WTC11 (cell line): ENCODE measurements at regions of chr1 and their contacts with region 1.

Region 1: GRCh38 chr1:48202030-48202752 is 20.3 kb upstream of the SLC5A9 start:
- DNase-seq: peak; percentile 80
- ATAC-seq: peak; percentile 76
- H3K4me3 Mint-ChIP-seq: no peak overlapping the region
- H3K27ac Mint-ChIP-seq: no peak overlapping the region
- H3K4me1 Mint-ChIP-seq: peaks cover 5% of the 10 kb centered on the region
- H3K27me3 Mint-ChIP-seq: peaks cover 3% of the 10 kb centered on the region; the same call in 1 of the 2 replicates
- CTCF ChIP-seq: peak; percentile 84

Region 2: GRCh38 chr1:48093696-48094528 is 108.3 kb before region 1 on chr1:
- CTCF ChIA-PET with region 1: interaction called, 17 read pairs
- POLR2A ChIA-PET with region 1: no interaction called
- DNase-seq: peak; percentile 91
- ATAC-seq: peak; percentile 97
- H3K4me3 Mint-ChIP-seq: peak overlapping the region; percentile 40
- H3K27ac Mint-ChIP-seq: no peak overlapping the region
- H3K4me1 Mint-ChIP-seq: peaks cover 4% of the 10 kb centered on the region
- H3K27me3 Mint-ChIP-seq: peaks cover 54% of the 10 kb centered on the region
- CTCF ChIP-seq: peak; percentile 82

Region 3: GRCh38 chr1:48109390-48110013 is 92.7 kb before region 1 on chr1:
- CTCF ChIA-PET with region 1: interaction called, 62 read pairs
- POLR2A ChIA-PET with region 1: no interaction called
- DNase-seq: no peak
- ATAC-seq: peak; percentile 87
- H3K4me3 Mint-ChIP-seq: no peak overlapping the region
- H3K27ac Mint-ChIP-seq: no peak overlapping the region
- H3K4me1 Mint-ChIP-seq: peaks cover 22% of the 10 kb centered on the region
- H3K27me3 Mint-ChIP-seq: no peaks in the 10 kb centered on the region
- CTCF ChIP-seq: peak; percentile 53; the same call in 1 of the 2 replicates

Region 4: DNA sequence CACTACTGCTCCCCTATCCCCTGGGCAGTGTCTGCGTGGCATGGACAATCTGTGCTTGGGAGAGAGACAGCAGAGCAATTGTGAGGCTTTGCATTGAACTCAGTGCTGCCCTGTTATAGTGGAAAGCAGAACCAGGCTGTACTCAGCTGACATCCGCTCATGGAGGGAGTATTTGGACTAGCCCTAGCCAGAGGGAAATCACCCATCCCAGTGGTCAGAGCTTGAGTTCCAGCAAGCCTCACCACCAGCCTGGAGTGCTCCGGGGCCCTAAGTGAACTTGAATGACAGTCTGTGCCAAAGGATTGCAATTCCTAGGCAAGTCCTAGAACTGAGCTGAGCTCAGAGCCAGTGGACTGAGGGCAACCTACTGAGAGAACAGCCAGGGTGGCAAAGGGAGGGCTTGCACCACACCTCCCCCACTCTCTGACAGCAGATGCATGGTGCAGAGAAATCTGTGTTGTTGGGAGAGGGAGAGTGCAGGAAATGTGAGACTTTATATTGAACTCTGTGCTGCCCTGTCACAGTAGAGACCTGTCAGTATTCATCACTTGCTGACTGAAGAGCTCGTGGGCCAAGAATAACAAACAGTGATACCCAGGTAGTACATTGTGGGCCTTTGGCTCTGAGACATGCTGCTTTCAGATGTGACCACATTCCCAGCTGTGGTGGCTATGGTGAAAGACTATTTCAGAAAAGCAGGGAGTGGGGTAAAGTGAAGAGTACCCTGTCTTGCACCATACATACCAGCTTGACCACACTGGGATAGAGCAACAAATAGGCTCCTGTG is 87.4 kb before region 1 on chr1:
- CTCF ChIA-PET with region 1: interaction called, 62 read pairs
- POLR2A ChIA-PET with region 1: no interaction called
- DNase-seq: no peak
- ATAC-seq: no peak
- H3K4me3 Mint-ChIP-seq: no peak overlapping the region
- H3K27ac Mint-ChIP-seq: no peak overlapping the region
- H3K4me1 Mint-ChIP-seq: peaks cover 22% of the 10 kb centered on the region
- H3K27me3 Mint-ChIP-seq: peaks cover 4% of the 10 kb centered on the region; the same call in 1 of the 2 replicates
- CTCF ChIP-seq: no peak

Region 5: GRCh38 chr1:48164571-48164970 is 37.6 kb before region 1 on chr1:
- CTCF ChIA-PET with region 1: no interaction called
- POLR2A ChIA-PET with region 1: no interaction called
- DNase-seq: no peak
- ATAC-seq: no peak
- H3K4me3 Mint-ChIP-seq: no peak overlapping the region
- H3K27ac Mint-ChIP-seq: no peak overlapping the region
- H3K4me1 Mint-ChIP-seq: peaks cover 5% of the 10 kb centered on the region
- H3K27me3 Mint-ChIP-seq: peaks cover 2% of the 10 kb centered on the region
- CTCF ChIP-seq: no peak

Region 6: GRCh38 chr1:48190881-48191280 is 11.3 kb before region 1 on chr1:
- CTCF ChIA-PET with region 1: no interaction called
- POLR2A ChIA-PET with region 1: no interaction called
- DNase-seq: no peak
- ATAC-seq: no peak
- H3K4me3 Mint-ChIP-seq: no peak overlapping the region
- H3K27ac Mint-ChIP-seq: no peak overlapping the region
- H3K4me1 Mint-ChIP-seq: no peaks in the 10 kb centered on the region
- H3K27me3 Mint-ChIP-seq: peaks cover 35% of the 10 kb centered on the region
- CTCF ChIP-seq: no peak

Region 7: GRCh38 chr1:48214820-48215219 is 12.6 kb after region 1 on chr1:
- CTCF ChIA-PET with region 1: interaction called, 11 read pairs
- POLR2A ChIA-PET with region 1: no interaction called
- DNase-seq: no peak
- ATAC-seq: peak; percentile 34
- H3K4me3 Mint-ChIP-seq: no peak overlapping the region
- H3K27ac Mint-ChIP-seq: no peak overlapping the region; the same call in 1 of the 2 replicates
- H3K4me1 Mint-ChIP-seq: peaks cover 58% of the 10 kb centered on the region
- H3K27me3 Mint-ChIP-seq: peaks cover 17% of the 10 kb centered on the region
- CTCF ChIP-seq: no peak

Region 8: DNA sequence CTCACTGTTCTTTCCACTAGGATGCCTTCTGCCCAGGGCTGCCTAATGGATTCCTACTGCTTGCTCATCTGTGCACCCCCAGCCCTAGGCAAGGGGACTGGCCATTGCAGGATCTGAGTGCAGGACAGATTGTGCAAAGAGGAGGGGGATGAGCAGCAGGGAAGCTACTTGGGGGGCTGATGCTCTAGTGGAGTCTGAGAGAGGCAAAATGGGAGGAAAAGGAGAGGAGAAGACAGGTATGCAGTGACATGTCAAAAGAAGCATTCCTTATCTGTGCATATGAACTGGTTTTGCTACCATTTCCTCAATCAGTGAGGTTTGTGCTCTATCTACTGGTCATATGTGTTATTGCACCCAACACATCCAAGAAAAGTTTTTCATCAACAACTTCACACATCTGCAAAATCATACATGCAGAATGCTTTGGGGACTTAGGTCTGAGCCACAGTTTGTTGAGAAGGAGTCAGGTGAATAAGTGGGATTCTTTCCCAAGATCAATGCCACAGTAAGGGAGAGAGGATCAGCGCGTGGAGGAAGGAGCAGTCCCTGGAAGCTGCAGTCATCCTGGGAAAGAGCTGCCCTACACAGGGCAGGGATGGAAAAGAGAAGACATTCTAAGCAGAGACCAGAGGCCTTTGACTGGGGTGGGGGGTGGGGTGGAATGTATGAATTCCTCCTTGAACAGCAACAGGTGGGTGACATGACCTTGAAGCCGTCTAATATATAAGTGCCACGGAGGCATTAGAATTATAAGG is 34.7 kb after region 1 on chr1:
- CTCF ChIA-PET with region 1: interaction called, 21 read pairs
- POLR2A ChIA-PET with region 1: no interaction called
- DNase-seq: no peak
- ATAC-seq: peak; percentile 87
- H3K4me3 Mint-ChIP-seq: no peak overlapping the region
- H3K27ac Mint-ChIP-seq: no peak overlapping the region
- H3K4me1 Mint-ChIP-seq: no peaks in the 10 kb centered on the region
- H3K27me3 Mint-ChIP-seq: peaks cover 3% of the 10 kb centered on the region
- CTCF ChIP-seq: peak; percentile 33; the same call in 1 of the 2 replicates

Region 9: DNA sequence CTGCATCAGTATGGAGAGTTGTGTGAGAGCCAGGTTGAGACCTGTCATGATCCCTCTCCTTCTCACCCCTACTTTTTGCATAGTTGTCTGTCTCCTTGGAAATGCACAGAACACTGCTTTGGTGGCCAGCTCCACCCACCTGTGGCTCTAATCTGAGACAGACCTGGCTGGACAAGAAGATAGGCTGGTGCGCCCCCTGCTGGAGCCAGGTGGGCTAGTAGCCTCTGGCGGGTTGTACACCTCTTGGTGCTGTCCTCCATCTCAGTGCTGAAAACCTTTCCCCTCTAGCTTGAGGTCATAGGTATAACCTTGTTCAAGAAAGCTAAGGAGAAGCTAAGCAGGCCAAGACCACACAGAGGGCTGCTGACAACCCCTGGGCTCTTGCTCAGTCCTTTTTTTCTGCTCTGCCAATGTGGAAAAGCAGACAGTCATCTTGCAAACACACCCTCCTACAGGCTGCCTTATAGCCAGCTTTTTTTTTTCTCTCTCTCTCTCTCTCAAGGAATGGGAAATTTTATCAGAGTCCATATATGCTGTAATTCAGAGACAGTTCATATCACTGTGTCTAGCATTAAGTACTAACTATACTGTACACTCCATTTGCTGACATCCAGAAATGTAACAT is 328.6 kb after region 1 on chr1:
- CTCF ChIA-PET with region 1: interaction called, 15 read pairs
- POLR2A ChIA-PET with region 1: no interaction called
- DNase-seq: peak; percentile 98
- ATAC-seq: peak; percentile 92
- H3K4me3 Mint-ChIP-seq: no peak overlapping the region
- H3K27ac Mint-ChIP-seq: no peak overlapping the region
- H3K4me1 Mint-ChIP-seq: peaks cover 38% of the 10 kb centered on the region
- H3K27me3 Mint-ChIP-seq: no peaks in the 10 kb centered on the region
- CTCF ChIP-seq: peak; percentile 88